ENCODE measurements at regions of chr19 and their contacts with region 1.

Region 1: DNA sequence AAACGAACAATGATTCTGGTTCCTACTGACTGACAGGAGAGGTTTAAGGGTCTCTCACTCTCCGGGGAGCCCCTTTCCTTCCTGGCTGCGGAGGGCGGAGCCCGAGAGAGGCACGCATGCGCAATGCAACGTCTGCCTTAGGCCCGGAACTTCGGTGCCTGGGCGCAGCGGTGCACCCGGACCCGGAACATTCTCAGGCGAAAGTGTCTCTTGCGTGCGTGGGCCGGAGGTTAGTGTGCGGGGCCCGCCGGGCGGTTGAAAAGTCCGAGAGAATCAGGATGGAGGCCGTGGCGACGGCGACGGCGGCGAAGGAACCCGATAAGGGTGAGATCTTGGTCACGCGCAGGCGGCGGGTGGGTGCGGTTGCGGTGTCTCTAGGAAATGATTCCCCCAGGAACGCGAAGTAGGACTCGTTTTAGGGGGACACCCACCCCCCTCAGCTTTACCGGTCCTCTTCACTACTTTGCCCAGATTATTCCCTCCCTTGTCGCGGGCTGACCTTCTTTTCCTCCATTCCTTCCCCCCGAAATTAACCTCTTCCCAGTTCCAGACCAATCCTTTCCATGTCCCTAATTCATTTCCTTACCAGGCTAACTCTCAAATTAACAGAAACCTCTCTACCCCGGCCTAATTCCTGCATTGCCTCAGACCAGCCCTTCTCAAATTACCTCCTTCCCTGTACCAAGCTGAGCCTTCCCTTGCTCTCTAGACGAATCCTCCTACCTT is at the start of gene CCDC97:
- DNase-seq: peak; percentile 89 to 95 (median 90)
- ATAC-seq: peak; percentile 79 to 91 (median 86)
- H3K4me3 ChIP-seq: peak within 1 kb of the TSS; percentile 40 to 95 (median 76)
- H3K27ac ChIP-seq: peak within 1 kb of the TSS; percentile 90 to 99 (median 96)
- H3K4me1 ChIP-seq: peaks cover 6 to 67% (median 31%) of the 10 kb centered on the region in 12 donors
- H3K27me3 ChIP-seq: no peaks in the 10 kb centered on the region
- CTCF ChIP-seq: peak in 1 of 12 donors; percentile 19
- POLR2A ChIP-seq: peak in 1 of 2 donors; percentile 60
- total RNA-seq, gene CCDC97: 10.0 to 22.2 (median 14.2) TPM

Region 2: DNA sequence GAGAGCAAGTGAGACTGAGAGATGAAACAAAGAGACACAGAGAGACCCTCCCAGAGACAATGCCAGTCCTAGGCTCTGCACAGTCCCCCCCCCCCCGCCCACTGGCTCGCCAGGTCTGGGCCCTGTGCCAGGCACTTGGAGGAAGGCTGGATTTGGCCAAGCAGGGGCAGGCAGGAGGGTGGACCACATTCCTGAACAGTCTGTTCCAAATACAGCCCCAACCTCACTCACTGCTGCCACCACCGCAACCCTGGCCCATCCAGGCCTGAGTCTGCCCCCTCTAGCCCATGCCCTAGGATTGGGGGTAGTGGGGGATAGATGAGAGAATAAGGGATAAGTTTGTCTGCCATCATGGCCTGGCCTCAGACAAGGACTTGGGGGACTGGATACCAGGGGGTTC is 176.9 kb before region 1 on chr19:
- intact Hi-C with region 1: loop called in 1 of 10 experiments (anchors 10 kb)
- DNase-seq: peak in 1 of 5 donors; percentile 31
- ATAC-seq: peak in 1 of 4 donors; percentile 18
- H3K4me3 ChIP-seq: no peak overlapping the region
- H3K27ac ChIP-seq: no peak overlapping the region
- H3K4me1 ChIP-seq: peaks cover 0 to 13% (median under 1%) of the 10 kb centered on the region in 12 donors
- H3K27me3 ChIP-seq: no peaks in the 10 kb centered on the region
- CTCF ChIP-seq: no peak
- POLR2A ChIP-seq: no peak

Region 3: GRCh38 chr19:41263850-41264580 is 46.2 kb before region 1 on chr19 and contains the start of gene HNRNPUL1:
- intact Hi-C with region 1: loop called in 9 of 10 experiments (anchors 1 to 5 kb)
- DNase-seq: peak; percentile 99
- ATAC-seq: peak; percentile 86 to 91 (median 87)
- H3K4me3 ChIP-seq: peak within 1 kb of the TSS; percentile 71 to 99 (median 92)
- H3K27ac ChIP-seq: peak within 1 kb of the TSS; percentile 91 to 100 (median 99)
- H3K4me1 ChIP-seq: peaks cover 3 to 36% (median 29%) of the 10 kb centered on the region in 12 donors
- H3K27me3 ChIP-seq: no peaks in the 10 kb centered on the region
- CTCF ChIP-seq: peak in 7 of 12 donors; percentile 10 to 49 (median 30)
- POLR2A ChIP-seq: peak in 1 of 2 donors; percentile 35
- total RNA-seq, gene HNRNPUL1: 88.7 to 138 (median 115) TPM

Region 4: DNA sequence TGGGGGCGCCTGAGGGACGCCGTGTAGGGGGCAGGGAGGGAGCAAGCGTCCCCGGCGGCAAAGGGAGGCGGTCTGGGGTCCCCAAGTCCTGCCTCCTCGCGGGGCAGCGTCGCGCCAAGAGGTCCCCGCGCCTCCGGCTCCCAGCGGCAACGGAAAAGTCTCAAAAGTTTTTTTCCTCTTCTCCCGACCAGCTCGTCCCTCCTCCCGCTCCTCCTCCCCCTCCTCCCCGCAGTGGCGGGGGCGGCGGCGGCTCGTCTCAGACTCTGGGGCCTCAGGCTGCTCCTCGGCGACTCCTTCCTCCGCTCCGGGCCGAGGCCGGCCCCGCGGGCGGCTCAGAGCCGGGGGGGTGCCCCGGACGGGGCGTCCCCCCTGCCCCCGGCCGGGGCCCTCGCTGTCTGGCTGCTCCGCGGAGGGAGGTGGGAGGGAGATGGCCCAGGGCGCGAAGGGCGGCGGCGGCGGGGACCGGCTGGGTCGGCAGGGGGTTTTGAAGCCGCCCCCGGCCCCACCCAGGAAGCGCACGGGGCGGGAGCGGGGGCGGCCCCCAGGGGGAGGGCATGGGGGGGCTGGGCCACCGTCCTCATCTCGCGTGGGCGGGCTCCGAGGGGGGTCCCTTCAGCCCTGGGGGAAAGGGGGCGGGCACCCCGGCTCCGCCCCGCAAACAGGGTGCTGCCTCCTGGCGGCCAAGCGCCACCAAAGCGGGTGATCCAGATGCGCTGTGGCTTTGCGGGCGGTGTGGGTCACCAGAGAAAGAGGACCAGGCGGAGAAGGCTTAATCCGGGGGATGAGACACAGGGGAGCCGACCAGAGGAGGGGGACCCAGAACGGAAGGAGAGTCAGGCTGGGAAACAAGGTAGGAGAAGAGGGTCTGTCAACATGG is 43.5 kb after region 1 on chr19 and contains the start of gene TGFB1:
- intact Hi-C with region 1: loop called in 4 of 10 experiments (anchors 5 kb)
- DNase-seq: peak; percentile 90 to 97 (median 91)
- ATAC-seq: peak; percentile 64 to 78 (median 72)
- H3K4me3 ChIP-seq: peak within 1 kb of the TSS; percentile 52 to 98 (median 74)
- H3K27ac ChIP-seq: peak within 1 kb of the TSS; percentile 67 to 96 (median 90)
- H3K4me1 ChIP-seq: peaks cover 0 to 73% (median 25%) of the 10 kb centered on the region in 12 donors
- H3K27me3 ChIP-seq: no peaks in the 10 kb centered on the region
- CTCF ChIP-seq: peak; percentile 78 to 98 (median 90)
- POLR2A ChIP-seq: peak in 1 of 2 donors; percentile 65
- total RNA-seq, gene TGFB1: 9.4 to 68.8 (median 13.9) TPM

Region 5: GRCh38 chr19:41363753-41364523 is 53.7 kb after region 1 on chr19 and contains the start of gene B9D2:
- intact Hi-C with region 1: no loop called
- DNase-seq: peak; percentile 97 to 99 (median 98)
- ATAC-seq: peak; percentile 97 to 98 (median 98)
- H3K4me3 ChIP-seq: peak within 1 kb of the TSS; percentile 64 to 91 (median 76)
- H3K27ac ChIP-seq: peak within 1 kb of the TSS; percentile 91 to 100 (median 98)
- H3K4me1 ChIP-seq: peaks cover 0 to 53% (median 9%) of the 10 kb centered on the region in 12 donors
- H3K27me3 ChIP-seq: no peaks in the 10 kb centered on the region
- CTCF ChIP-seq: no peak
- POLR2A ChIP-seq: peak in 1 of 2 donors; percentile 66
- total RNA-seq, gene B9D2: 2.0 to 5.1 (median 3.3) TPM

Region 6: GRCh38 chr19:41439441-41440222 is 129.4 kb after region 1 on chr19 and contains the start of gene DMAC2:
- intact Hi-C with region 1: loop called in 2 of 10 experiments (anchors 5 to 10 kb)
- DNase-seq: peak; percentile 94 to 98 (median 97)
- ATAC-seq: peak; percentile 96 to 99 (median 98)
- H3K4me3 ChIP-seq: peak within 1 kb of the TSS; percentile 29 to 90 (median 76)
- H3K27ac ChIP-seq: peak within 1 kb of the TSS; percentile 84 to 100 (median 94)
- H3K4me1 ChIP-seq: peaks cover 0 to 21% (median 12%) of the 10 kb centered on the region in 12 donors
- H3K27me3 ChIP-seq: no peaks in the 10 kb centered on the region
- CTCF ChIP-seq: peak; percentile 21 to 71 (median 47)
- POLR2A ChIP-seq: peak in 1 of 2 donors; percentile 46
- total RNA-seq, gene DMAC2: 67.9 to 138 (median 102) TPM